Common myeloid progenitor, CD34-positive (primary cell): ENCODE measurements at regions of chr17 and their contacts with region 1.

Region 1: GRCh38 chr17:39621523-39622379 is 5.0 kb upstream of the PPP1R1B start:
- DNase-seq: peak; percentile 78 to 87 (median 81)
- H3K4me3 ChIP-seq: peak overlapping the region in 1 of 7 experiments; percentile 20
- H3K27ac ChIP-seq: no peak overlapping the region
- H3K4me1 ChIP-seq: peaks cover 0 to 30% (median 22%) of the 10 kb centered on the region in 4 experiments
- H3K27me3 ChIP-seq: peaks cover 0 to 41% (median 28%) of the 10 kb centered on the region in 5 experiments

Region 2: DNA sequence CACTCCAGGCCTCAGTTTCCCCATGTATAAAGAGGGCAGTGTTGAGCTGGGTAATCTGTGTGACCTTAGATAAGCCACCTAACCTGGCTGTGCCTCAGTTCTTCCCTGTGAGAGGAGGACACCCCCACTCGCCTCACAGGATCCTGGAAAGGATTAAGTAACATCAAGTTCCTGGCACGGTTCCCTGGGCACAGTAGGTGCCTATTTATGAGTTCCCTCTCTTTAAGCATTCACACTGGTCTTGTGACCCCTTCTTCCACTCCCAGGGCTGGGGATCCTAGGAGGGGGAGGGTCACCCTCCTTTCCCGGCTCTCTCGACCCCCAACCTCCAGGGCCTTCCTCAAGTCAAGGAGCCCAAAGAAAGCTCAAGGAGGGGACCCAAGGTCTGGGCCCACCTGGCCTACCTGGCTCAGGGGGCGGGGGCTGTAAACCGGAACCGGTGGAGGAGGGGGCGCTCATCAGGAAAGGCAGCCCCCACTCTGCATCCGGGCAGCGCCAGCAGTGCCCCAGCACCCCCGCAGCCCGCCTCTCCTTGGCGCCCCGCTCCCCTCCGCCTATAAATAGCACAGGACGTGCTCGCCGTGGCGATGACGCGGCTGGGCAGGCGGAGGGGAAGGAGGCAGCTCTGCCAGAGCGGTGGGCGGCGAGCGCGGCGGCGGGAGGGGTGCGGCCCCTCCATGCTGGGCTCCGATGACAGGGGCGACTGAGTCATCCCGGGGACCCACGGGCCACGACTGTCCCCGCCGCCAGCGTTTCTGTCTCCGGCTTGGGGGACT is 412.2 kb before region 1 on chr17:
- CTCF ChIA-PET with region 1: no interaction called
- POLR2A ChIA-PET with region 1: no interaction called
- DNase-seq: peak; percentile 66 to 91 (median 85)
- H3K4me3 ChIP-seq: peak overlapping the region; percentile 15 to 71 (median 53)
- H3K27ac ChIP-seq: no peak overlapping the region
- H3K4me1 ChIP-seq: peaks cover 0 to 32% (median 26%) of the 10 kb centered on the region in 4 experiments
- H3K27me3 ChIP-seq: peaks cover 0 to 5% (median under 1%) of the 10 kb centered on the region in 5 experiments

Region 3: GRCh38 chr17:39547713-39548478 is 73.9 kb before region 1 on chr17:
- CTCF ChIA-PET with region 1: interaction called, 102 read pairs
- POLR2A ChIA-PET with region 1: no interaction called
- DNase-seq: peak; percentile 55 to 69 (median 60)
- H3K4me3 ChIP-seq: no peak overlapping the region
- H3K27ac ChIP-seq: no peak overlapping the region
- H3K4me1 ChIP-seq: no peaks in the 10 kb centered on the region
- H3K27me3 ChIP-seq: peaks cover 0 to 3% (median 0%) of the 10 kb centered on the region in 5 experiments

Region 4: DNA sequence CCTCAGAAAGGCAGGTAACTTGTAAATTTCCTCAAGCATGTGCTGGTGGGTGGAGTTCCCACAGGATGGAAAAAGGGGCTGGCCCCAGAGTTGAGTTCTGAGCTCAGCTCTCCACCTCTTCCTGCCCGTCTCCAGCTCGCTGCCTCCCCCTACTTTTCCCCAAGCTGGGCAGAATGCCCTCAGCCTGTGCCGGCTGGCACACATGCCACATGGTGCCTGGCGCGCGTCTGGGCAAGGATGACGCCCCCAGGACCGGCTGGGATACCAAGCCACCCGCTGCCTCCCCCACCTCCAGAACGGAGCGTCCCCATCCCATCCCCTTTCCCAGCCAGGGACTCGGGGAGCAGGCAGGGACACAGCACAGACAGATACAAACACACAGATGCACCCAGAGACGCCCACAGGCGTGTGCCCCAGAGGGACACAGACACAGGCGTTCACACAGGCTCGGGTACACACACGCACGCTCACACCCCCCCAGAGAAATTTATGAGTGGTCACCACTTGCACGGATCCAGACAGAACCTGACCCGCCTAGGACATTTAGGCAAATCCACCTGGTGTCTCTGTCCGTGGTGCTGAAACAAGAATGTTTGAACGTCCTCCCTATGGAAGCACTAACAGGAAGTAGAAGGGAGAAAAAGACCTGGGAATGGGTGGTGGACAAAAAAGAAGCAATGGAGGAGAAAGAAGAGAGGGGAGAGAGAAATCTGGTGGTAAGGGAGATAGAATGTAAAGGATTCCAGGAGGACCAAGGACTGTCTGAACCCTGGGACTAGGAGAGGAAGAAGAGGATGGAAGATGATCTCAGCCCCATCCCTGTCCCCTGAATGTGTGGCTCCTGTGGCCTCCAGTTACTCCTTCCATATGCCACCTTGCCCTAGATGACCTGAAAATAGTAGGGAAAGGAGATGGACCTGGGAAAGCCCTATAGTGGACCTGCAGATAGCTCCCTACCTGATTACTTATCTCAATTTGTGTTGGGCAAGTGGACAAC is 29.5 kb before region 1 on chr17:
- CTCF ChIA-PET with region 1: no interaction called
- POLR2A ChIA-PET with region 1: no interaction called
- DNase-seq: peak in 2 of 3 donors; percentile 55 to 62
- H3K4me3 ChIP-seq: no peak overlapping the region
- H3K27ac ChIP-seq: no peak overlapping the region
- H3K4me1 ChIP-seq: no peaks in the 10 kb centered on the region
- H3K27me3 ChIP-seq: peaks cover 2 to 65% (median 30%) of the 10 kb centered on the region in 5 experiments

Region 5: GRCh38 chr17:39636927-39637736 is 15.4 kb after region 1 on chr17 and contains the start of gene STARD3:
- CTCF ChIA-PET with region 1: interaction called, 111 read pairs
- POLR2A ChIA-PET with region 1: interaction called, 9 read pairs
- DNase-seq: peak; percentile 89 to 93 (median 91)
- H3K4me3 ChIP-seq: peak within 1 kb of the TSS; percentile 71 to 91 (median 82)
- H3K27ac ChIP-seq: peak within 1 kb of the TSS; percentile 69 to 88
- H3K4me1 ChIP-seq: peaks cover 14 to 77% (median 65%) of the 10 kb centered on the region in 4 experiments
- H3K27me3 ChIP-seq: no peaks in the 10 kb centered on the region

Region 6: GRCh38 chr17:39653662-39654331 is 32.0 kb after region 1 on chr17:
- CTCF ChIA-PET with region 1: interaction called, 130 read pairs
- POLR2A ChIA-PET with region 1: no interaction called
- DNase-seq: peak; percentile 63 to 78 (median 70)
- H3K4me3 ChIP-seq: no peak overlapping the region
- H3K27ac ChIP-seq: no peak overlapping the region
- H3K4me1 ChIP-seq: peaks cover 0 to 28% (median 16%) of the 10 kb centered on the region in 4 experiments
- H3K27me3 ChIP-seq: no peaks in the 10 kb centered on the region

Region 7: GRCh38 chr17:39668199-39668966 is 46.6 kb after region 1 on chr17 and contains the start of gene PNMT:
- CTCF ChIA-PET with region 1: interaction called, 445 read pairs
- POLR2A ChIA-PET with region 1: interaction called, 3 read pairs
- DNase-seq: peak; percentile 68 to 80 (median 75)
- H3K4me3 ChIP-seq: peak within 1 kb of the TSS in 5 of 7 experiments; percentile 17 to 63 (median 41)
- H3K27ac ChIP-seq: peak within 1 kb of the TSS in 1 of 2 experiments; percentile 43
- H3K4me1 ChIP-seq: peaks cover 0 to 56% (median 31%) of the 10 kb centered on the region in 4 experiments
- H3K27me3 ChIP-seq: peaks cover 0 to 31% (median 11%) of the 10 kb centered on the region in 5 experiments

Region 8: GRCh38 chr17:39730095-39730921 is 108.6 kb after region 1 on chr17 and contains the start of gene MIEN1:
- CTCF ChIA-PET with region 1: interaction called, 10 read pairs
- POLR2A ChIA-PET with region 1: no interaction called
- DNase-seq: peak; percentile 80 to 86 (median 85)
- H3K4me3 ChIP-seq: peak within 1 kb of the TSS; percentile 59 to 93 (median 81)
- H3K27ac ChIP-seq: peak within 1 kb of the TSS; percentile 85 to 86
- H3K4me1 ChIP-seq: peaks cover 5 to 13% (median 8%) of the 10 kb centered on the region in 4 experiments
- H3K27me3 ChIP-seq: peaks cover 0 to 4% (median 2%) of the 10 kb centered on the region in 5 experiments

Region 9: DNA sequence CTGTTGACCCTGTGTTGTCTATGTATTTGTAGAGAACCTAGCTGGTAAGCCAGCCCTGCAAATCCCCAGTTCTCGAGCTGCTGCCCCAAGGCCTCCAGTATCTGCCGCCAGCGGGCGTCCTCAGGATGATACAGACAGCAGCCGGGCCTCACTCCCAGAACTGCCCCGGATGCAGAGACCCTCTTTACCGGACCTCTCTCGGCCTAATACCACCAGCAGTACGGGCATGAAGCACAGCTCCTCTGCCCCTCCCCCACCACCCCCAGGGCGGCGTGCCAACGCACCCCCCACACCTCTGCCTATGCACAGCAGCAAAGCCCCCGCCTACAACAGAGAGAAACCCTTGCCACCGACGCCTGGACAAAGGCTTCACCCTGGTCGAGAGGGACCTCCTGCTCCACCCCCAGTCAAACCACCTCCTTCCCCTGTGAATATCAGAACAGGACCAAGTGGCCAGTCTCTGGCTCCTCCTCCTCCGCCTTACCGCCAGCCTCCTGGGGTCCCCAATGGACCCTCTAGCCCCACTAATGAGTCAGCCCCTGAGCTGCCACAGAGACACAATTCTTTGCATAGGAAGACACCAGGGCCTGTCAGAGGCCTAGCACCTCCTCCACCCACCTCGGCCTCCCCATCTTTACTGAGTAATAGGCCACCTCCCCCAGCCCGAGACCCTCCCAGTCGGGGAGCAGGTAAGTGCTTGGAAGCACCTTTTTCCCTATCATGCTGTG is 642.9 kb after region 1 on chr17:
- CTCF ChIA-PET with region 1: no interaction called
- POLR2A ChIA-PET with region 1: no interaction called
- DNase-seq: no peak
- H3K4me3 ChIP-seq: no peak overlapping the region
- H3K27ac ChIP-seq: no peak overlapping the region
- H3K4me1 ChIP-seq: no peaks in the 10 kb centered on the region
- H3K27me3 ChIP-seq: no peaks in the 10 kb centered on the region